ENCODE measurements at regions of chr19 and their contacts with region 1.

Region 1: GRCh38 chr19:4089400-4089908 is 22.8 kb upstream of the ZBTB7A start:
- DNase-seq: peak; percentile 92
- H3K4me3 Mint-ChIP-seq: peak overlapping the region; percentile 86
- H3K27ac Mint-ChIP-seq: peak overlapping the region; percentile 97
- H3K4me1 Mint-ChIP-seq: peaks cover 36% of the 10 kb centered on the region
- H3K27me3 Mint-ChIP-seq: no peaks in the 10 kb centered on the region

Region 2: DNA sequence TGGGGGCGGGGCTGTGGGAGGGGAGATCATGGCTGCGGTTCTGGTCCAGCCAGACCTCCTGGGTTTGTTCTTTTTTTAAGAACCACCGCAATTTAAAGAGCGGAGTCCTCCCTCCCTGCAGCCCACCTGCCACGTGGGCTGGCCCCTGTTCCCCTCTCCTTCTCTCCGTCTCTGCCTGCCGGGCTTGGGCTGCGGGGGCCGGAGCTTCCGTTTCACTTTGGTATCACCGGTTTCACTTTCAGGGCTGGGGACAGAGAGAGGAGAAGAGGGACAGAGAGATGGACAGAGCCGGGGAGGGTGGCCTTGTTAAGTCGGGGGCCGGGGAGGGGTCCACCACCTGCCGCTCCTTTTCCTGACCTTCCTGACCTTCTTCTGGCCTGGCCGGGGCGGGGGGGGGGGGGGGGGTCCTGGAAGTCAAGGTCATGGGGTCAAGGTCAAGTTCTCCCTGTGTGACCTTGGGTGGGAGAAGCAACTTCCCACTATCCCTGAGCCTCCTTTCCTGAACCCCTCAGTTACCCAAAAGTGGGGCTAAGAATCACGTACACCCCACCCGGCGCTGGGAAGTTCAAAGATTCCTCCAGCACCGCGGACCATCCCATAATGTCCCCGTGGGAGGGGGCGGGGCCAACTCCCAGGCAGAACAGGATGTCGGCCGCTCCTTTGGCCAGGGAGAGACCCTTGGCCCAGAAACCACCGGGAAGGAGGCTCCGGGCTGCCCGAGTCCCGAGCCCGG is 11.4 kb before region 1 on chr19:
- intact Hi-C with region 1: loop called (anchors 2 kb)
- DNase-seq: peak; percentile 88
- H3K4me3 Mint-ChIP-seq: peak overlapping the region; percentile 76
- H3K27ac Mint-ChIP-seq: peak overlapping the region; percentile 87
- H3K4me1 Mint-ChIP-seq: peaks cover 39% of the 10 kb centered on the region
- H3K27me3 Mint-ChIP-seq: no peaks in the 10 kb centered on the region